PC-3 (cell line): ENCODE measurements at regions of chr2 and their contacts with region 1.

Region 1: DNA sequence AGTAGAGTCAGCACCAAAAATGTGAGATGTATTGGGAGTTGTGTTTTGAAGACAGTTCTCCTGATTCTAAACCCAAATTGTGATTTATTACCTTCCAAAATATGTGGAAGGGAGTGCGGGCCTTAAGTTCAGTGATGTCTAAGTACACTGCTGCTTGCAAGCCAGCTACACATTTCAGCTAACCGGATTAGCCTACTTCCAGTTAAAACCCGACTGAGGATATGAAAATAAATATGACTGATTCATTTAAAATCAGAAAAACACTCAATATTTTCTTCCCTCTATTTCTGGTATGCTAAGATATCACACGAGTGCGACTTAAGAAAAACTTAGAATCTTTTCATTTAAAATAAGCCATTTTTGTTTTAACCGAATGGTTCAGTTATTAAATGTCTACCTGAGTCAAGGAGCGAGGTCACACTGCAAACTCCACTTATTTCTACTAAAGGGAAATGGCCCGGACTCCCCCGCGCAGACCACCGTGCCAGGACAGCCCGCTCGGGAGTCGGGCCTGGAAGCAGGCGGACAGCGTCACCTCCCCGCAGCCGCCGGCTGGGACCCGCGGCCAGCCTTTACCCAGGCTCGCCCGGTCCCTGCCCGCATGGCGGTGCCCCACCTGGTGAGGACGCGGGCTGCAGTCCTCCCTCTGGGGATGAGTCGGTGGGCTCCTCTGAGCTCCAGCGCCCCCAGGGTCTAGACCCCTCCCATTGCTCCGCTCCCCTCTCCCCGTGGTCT is 720 bp downstream of the FHL2 start:
- DNase-seq: no peak
- ATAC-seq: peak; percentile 23
- H3K4me3 ChIP-seq: peak overlapping the region; percentile 97
- H3K27ac ChIP-seq: peak overlapping the region; percentile 96
- H3K4me1 ChIP-seq: peaks cover 49% of the 10 kb centered on the region
- H3K27me3 ChIP-seq: no peaks in the 10 kb centered on the region
- CTCF ChIP-seq: no peak

Region 2: DNA sequence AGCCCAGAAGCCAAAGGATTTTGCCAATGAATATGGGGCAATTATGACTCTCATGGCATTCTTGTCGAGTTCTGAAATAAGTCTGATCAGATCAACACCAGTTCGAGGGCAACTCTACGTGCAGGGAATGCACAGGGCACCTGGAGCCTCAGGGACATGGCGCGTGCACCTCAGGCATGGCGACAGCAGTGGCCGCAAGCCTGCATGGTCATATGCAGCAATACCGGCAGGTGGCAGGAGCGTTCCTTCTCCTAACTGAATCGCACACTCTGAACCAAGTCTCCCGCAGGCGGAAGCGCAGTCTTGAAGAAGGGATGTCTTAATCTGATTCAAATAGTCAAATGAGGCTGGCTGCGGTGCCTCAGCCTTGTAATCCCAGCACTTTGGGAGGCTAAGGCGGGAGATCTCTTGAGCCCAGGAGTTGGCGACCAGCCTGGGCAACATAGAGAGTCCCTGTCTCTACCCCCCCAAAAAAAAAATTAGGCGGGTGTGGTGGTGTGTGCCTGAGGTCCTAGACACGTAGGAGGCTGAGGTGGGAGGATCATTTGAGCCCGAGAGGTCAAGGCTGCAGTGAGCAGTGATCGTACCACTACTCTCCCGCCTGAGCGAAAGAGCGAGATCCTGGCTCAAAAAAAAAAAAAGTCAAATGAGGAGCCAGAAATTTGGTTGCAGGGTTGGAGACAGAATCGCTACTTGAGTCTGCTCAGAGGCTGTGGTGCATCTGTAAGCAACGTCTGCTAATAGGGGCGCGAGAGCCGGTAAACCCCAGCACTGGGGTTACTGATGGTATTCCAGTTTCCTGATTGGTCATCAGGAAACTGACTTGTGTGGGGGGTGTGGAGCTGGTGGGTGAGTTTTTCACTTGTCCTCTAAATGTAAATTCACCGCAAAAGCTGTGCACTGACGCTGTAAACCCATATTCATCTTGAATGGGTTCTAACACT is 28.1 kb before region 1 on chr2:
- CTCF ChIA-PET with region 1: no interaction called
- POLR2A ChIA-PET with region 1: no interaction called
- intact Hi-C with region 1: loop called (anchors 2 kb)
- DNase-seq: peak; percentile 85
- ATAC-seq: peak; percentile 81
- H3K4me3 ChIP-seq: no peak overlapping the region
- H3K27ac ChIP-seq: peak overlapping the region; percentile 51; the same call in 1 of the 2 replicates
- H3K4me1 ChIP-seq: peaks cover 27% of the 10 kb centered on the region
- H3K27me3 ChIP-seq: no peaks in the 10 kb centered on the region
- CTCF ChIP-seq: peak; percentile 85

Region 3: DNA sequence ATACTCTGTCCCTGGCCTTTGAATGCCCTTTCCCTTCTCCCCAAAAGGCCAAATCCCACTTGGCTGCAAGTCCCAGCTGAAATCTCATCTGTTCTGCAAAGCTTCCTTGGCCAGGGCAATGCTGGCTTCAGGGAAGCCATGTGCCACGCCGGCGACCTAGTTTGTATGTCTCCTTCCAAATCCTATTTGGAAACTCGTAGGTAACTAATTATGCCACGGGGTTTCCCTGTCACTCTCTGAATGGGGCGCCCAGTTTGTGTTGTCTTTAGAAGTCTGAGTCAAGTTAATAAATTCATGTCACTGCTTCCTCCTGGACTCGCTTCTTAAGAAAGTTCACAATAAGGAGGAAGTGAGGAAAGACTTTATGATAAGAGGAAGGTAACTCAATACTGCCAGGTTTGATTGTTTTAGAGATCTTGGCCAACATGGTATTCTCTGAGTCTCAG is 18.4 kb before region 1 on chr2:
- CTCF ChIA-PET with region 1: no interaction called
- POLR2A ChIA-PET with region 1: no interaction called
- intact Hi-C with region 1: loop called (anchors 1 kb)
- DNase-seq: peak; percentile 60
- ATAC-seq: peak; percentile 55
- H3K4me3 ChIP-seq: no peak overlapping the region
- H3K27ac ChIP-seq: peak overlapping the region; percentile 50
- H3K4me1 ChIP-seq: peaks cover 31% of the 10 kb centered on the region
- H3K27me3 ChIP-seq: no peaks in the 10 kb centered on the region
- CTCF ChIP-seq: no peak

Region 4: GRCh38 chr2:105409717-105410116 is 11.6 kb after region 1 on chr2:
- CTCF ChIA-PET with region 1: no interaction called
- POLR2A ChIA-PET with region 1: interaction called, 11 read pairs
- intact Hi-C with region 1: no loop called
- DNase-seq: peak; percentile 95
- ATAC-seq: peak; percentile 93
- H3K4me3 ChIP-seq: no peak overlapping the region
- H3K27ac ChIP-seq: peak overlapping the region; percentile 74
- H3K4me1 ChIP-seq: peaks cover 56% of the 10 kb centered on the region
- H3K27me3 ChIP-seq: no peaks in the 10 kb centered on the region
- CTCF ChIP-seq: no peak

Region 5: GRCh38 chr2:105521205-105521604 is 123.1 kb after region 1 on chr2:
- CTCF ChIA-PET with region 1: interaction called, 14 read pairs
- POLR2A ChIA-PET with region 1: interaction called, 3 read pairs
- intact Hi-C with region 1: loop called (anchors 2 kb)
- DNase-seq: peak; percentile 67
- ATAC-seq: no peak
- H3K4me3 ChIP-seq: no peak overlapping the region
- H3K27ac ChIP-seq: no peak overlapping the region
- H3K4me1 ChIP-seq: no peaks in the 10 kb centered on the region
- H3K27me3 ChIP-seq: no peaks in the 10 kb centered on the region
- CTCF ChIP-seq: peak; percentile 88